Right cardiac atrium (tissue), 5 donors: ENCODE measurements at regions of chr11 and their contacts with region 1.

Region 1: GRCh38 chr11:72080256-72080974 is at the starts of genes LRRC51 and NUMA1:
- DNase-seq: peak; percentile 99 to 100 (median 99)
- ATAC-seq: peak; percentile 98
- H3K4me3 ChIP-seq: peak within 1 kb of the TSS; percentile 72
- H3K27ac ChIP-seq: peak within 1 kb of the TSS; percentile 95
- H3K4me1 ChIP-seq: no peaks in the 10 kb centered on the region
- H3K27me3 ChIP-seq: no peaks in the 10 kb centered on the region
- total RNA-seq, gene LRRC51: 3.8 to 5.5 (median 4.9) TPM
- total RNA-seq, gene NUMA1: 75.8 to 125 (median 102) TPM

Region 2: DNA sequence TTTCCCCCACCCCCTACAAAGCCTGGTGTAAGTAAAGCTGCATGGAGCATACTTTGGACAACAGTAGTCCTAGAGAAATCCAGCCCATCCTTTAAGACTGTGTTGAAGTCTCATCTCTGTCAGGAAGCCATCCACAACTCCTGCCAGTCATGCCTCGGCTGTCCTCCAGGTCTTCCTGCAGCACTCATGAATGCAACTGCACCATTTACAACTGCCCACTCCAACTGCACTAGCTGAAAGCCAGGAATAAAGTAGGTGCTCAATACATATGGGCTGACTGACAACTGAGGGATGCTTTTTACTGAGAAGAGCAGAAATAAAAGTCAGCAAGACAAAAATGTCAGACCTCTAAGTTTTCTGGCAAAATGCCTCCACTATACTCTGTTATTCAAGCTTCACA is 54.3 kb before region 1 on chr11:
- intact Hi-C with region 1: loop called in 1 of 4 experiments (anchors 5 kb)
- DNase-seq: no peak
- ATAC-seq: no peak
- H3K4me3 ChIP-seq: no peak overlapping the region
- H3K27ac ChIP-seq: no peak overlapping the region
- H3K4me1 ChIP-seq: peaks cover 4% of the 10 kb centered on the region
- H3K27me3 ChIP-seq: no peaks in the 10 kb centered on the region

Region 3: GRCh38 chr11:72040726-72041441 is 39.5 kb before region 1 on chr11:
- intact Hi-C with region 1: loop called in 2 of 4 experiments (anchors 5 kb)
- DNase-seq: peak; percentile 96 to 99 (median 99)
- ATAC-seq: peak; percentile 88 to 89
- H3K4me3 ChIP-seq: peak overlapping the region; percentile 59
- H3K27ac ChIP-seq: peak overlapping the region; percentile 91
- H3K4me1 ChIP-seq: peaks cover 14% of the 10 kb centered on the region
- H3K27me3 ChIP-seq: no peaks in the 10 kb centered on the region

Region 4: DNA sequence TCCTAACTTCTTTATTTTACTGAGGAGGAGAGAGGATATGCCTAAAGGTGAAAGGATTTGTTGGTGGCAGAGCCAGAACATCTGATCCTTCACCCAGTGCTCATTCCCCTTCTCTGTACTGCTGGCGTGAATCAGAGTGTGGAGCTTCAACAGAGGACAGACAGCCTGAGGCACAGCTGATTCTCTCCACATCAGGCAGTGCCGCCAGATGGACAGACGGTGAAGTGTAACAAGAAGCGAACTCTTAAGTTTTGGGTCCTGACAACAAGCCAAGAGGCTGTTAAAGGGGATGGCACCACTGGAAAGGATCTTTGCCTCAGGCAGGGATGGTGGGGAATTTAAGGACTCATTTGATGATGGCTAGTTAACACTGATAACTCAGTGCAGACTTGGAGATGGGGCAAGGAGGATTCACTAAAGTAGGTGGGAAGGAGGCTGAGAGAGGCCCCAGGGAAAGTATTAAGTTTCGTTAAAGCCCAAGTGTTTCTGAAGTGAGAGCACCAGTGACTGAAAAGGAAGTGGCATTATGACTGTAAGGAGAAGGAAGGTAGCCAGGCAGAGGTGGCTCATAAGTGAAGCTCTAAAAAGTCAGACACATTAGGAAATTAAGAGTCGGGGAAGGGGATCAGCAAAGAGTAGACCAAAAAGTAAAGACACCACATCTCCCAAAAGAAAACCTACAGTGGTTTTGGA is 272.6 kb after region 1 on chr11:
- intact Hi-C with region 1: no loop called
- DNase-seq: no peak
- ATAC-seq: no peak
- H3K4me3 ChIP-seq: no peak overlapping the region
- H3K27ac ChIP-seq: no peak overlapping the region
- H3K4me1 ChIP-seq: peaks cover 7% of the 10 kb centered on the region
- H3K27me3 ChIP-seq: no peaks in the 10 kb centered on the region